ENCODE measurements at regions of chr20 and their contacts with region 1.

Region 1: DNA sequence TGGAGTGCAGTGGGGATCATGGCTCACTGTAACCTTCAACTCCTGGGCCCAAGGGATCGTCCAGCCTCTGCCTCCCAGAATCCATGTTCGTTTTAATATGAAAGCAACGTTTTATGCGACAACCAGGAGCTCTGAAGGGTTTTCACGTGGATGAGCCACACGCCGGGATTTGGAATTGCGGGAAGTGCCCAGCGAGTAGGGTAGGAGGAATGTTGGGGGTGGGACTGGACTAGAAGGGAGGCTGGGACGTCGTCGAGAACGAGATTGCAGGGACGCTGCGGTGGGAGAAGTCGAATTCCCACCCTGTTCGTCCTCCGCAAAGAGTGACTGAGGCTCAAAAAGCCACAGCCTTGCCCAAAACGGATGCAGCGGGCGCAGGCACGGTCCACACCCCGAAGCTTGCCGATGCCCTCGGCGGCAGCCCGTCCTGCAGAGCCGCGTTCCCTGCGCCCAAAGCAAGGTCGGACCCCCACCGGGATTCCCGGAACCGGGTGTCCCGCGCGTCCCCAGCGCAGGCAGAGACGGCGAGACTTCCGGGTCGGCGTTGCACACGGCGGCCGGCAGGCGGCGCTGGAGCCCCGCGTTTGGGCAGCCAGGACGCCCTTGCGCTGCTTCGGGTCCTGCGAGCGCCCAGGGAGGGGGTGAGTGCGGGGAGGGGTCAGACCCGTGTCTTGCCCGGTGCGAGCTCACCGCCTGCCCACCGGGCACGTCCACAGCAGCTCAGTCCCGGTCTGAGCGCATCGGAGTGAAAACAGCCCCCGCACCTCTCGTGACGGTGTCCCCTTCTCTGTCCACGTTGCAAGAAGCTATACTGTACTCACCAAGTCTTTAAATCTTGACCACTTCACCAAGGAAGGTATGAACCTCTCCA is 87.8 kb downstream of the DHX35 start:
- DNase-seq: peak; percentile 72 to 96 (median 80)
- ATAC-seq: peak; percentile 95
- H3K4me3 ChIP-seq: peak overlapping the region; percentile 54 to 75
- H3K27ac ChIP-seq: no peak overlapping the region
- H3K4me1 ChIP-seq: peaks cover 5 to 15% of the 10 kb centered on the region in 2 donors
- H3K27me3 ChIP-seq: peaks cover 0 to 5% of the 10 kb centered on the region in 2 donors
- CTCF ChIP-seq: peak; percentile 96 to 99

Region 2: DNA sequence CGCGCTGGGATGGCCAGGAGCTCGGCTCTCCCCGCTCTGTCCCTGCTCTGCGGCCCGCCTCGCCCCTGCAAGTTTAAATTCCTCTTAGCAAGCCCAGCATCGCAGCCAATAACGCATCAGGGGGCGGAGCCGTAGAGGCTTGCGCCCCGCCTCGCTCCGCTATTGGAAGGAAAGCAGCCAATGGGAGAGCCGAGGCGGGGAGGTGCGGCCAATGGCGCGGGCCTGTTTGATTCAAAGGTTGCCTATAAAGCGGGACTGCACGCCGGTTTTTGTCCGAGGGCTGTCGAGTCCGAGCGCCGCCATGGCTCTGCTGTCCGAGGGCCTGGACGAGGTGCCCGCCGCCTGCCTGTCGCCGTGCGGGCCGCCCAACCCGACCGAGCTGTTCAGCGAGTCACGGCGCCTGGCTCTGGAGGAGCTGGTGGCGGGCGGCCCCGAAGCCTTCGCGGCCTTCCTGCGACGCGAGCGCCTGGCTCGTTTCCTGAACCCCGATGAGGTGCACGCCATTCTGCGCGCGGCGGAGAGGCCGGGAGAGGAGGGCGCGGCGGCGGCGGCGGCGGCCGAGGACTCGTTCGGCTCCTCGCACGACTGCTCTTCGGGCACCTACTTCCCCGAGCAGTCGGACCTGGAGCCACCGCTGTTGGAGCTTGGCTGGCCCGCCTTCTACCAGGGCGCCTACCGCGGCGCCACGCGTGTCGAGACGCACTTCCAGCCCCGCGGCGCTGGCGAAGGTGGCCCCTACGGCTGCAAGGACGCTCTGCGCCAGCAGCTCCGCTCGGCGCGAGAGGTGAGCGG is 123.6 kb before region 1 on chr20 and contains the start of gene FAM83D:
- intact Hi-C with region 1: loop called in 1 of 2 experiments (anchors 5 kb)
- DNase-seq: peak; percentile 87 to 97 (median 96)
- ATAC-seq: peak; percentile 98
- H3K4me3 ChIP-seq: peak within 1 kb of the TSS; percentile 66 to 73
- H3K27ac ChIP-seq: peak within 1 kb of the TSS in 1 of 2 donors; percentile 33
- H3K4me1 ChIP-seq: peaks cover 0 to 18% of the 10 kb centered on the region in 2 donors
- H3K27me3 ChIP-seq: no peaks in the 10 kb centered on the region
- CTCF ChIP-seq: no peak
- polyA plus RNA-seq, gene FAM83D: 10.7 to 28.1 (median 13.2) TPM